MCF 10A (cell line): ENCODE measurements at regions of chr4 and their contacts with region 1.

Region 1: GRCh38 chr4:18593445-18594002 is 572.0 kb upstream of the LCORL start:
- DNase-seq: peak; percentile 79
- H3K4me3 Mint-ChIP-seq: peak overlapping the region; percentile 54
- H3K27ac Mint-ChIP-seq: no peak overlapping the region
- H3K4me1 Mint-ChIP-seq: peaks cover 6% of the 10 kb centered on the region
- H3K27me3 Mint-ChIP-seq: no peaks in the 10 kb centered on the region
- CTCF ChIP-seq: peak; percentile 67

Region 2: DNA sequence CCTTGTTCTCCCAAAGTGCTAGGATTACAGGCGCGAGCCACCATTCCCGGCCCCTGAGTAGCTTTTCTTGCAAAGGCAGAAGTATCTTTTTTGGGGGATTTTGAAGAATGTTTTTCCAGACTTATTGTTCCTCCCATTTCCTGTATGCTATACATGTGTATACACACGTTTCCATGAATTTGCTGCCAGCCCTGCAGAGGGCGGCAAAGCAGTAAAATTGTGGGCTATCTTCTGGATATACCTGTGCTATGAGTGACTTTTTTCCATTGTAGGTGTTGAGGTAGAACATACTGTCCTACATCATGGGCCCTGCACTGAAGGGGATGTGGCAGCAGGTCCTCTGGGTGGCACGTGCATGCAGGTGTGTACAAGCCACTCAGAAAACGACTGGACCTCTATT is 996.0 kb before region 1 on chr4:
- CTCF ChIA-PET with region 1: no interaction called
- POLR2A ChIA-PET with region 1: no interaction called
- intact Hi-C with region 1: loop called (anchors 1 kb)
- DNase-seq: peak; percentile 35
- H3K4me3 Mint-ChIP-seq: no peak overlapping the region
- H3K27ac Mint-ChIP-seq: no peak overlapping the region
- H3K4me1 Mint-ChIP-seq: no peaks in the 10 kb centered on the region
- H3K27me3 Mint-ChIP-seq: no peaks in the 10 kb centered on the region
- CTCF ChIP-seq: peak; percentile 32

Region 3: DNA sequence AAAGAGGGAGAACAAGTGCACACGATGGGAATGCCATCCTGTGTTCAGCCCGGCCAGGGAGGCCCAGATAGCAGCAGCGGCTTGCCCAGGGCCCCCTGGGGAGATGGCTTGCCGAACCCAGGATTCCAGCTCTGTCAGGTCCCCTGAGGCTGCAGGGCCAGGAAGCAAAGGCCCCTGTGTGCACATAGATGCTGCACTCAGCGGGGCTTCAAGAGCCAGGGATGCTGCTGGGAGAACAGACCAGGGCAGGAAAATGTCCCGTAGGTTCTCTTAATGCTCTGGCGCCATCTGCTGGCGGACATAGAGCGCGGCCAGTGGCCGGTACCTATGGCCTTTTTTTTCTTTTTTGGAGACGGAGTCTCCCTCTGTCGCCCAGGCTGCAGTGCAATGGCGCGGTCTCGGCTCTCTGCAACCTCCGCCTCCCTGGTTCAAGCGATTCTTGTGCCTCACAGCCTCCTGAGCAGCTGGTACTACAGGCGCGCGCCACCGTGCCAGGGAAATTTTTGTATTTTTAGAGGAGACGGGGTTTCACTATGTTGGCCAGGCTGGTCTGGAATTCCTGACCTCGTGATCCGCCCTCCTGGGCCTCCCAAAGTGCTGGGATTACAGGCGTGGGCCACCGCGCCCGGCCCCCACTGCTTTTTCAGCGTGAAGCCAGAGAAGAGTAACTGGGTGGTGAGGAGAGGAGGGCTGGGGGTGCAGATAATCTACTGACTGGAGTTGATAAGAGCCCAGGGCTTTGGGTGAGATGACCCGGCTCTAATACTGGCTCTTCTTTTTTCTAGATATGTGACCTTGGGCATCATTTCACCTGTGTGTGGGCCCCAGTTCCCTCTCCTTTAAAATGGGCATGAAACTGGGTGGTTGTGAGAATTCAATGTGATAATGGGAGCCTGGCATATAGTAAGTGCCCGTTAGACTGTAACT is 956.6 kb before region 1 on chr4:
- CTCF ChIA-PET with region 1: interaction called, 3 read pairs
- POLR2A ChIA-PET with region 1: no interaction called
- intact Hi-C with region 1: loop called (anchors 5 kb)
- DNase-seq: peak; percentile 80
- H3K4me3 Mint-ChIP-seq: no peak overlapping the region
- H3K27ac Mint-ChIP-seq: no peak overlapping the region
- H3K4me1 Mint-ChIP-seq: no peaks in the 10 kb centered on the region
- H3K27me3 Mint-ChIP-seq: no peaks in the 10 kb centered on the region
- CTCF ChIP-seq: peak; percentile 79

Region 4: GRCh38 chr4:17817020-17817419 is 776.5 kb before region 1 on chr4:
- CTCF ChIA-PET with region 1: interaction called, 18 read pairs
- POLR2A ChIA-PET with region 1: no interaction called
- intact Hi-C with region 1: loop called (anchors 1 kb)
- DNase-seq: peak; percentile 56
- H3K4me3 Mint-ChIP-seq: peak overlapping the region; percentile 24
- H3K27ac Mint-ChIP-seq: no peak overlapping the region
- H3K4me1 Mint-ChIP-seq: peaks cover 13% of the 10 kb centered on the region
- H3K27me3 Mint-ChIP-seq: no peaks in the 10 kb centered on the region
- CTCF ChIP-seq: peak; percentile 52

Region 5: DNA sequence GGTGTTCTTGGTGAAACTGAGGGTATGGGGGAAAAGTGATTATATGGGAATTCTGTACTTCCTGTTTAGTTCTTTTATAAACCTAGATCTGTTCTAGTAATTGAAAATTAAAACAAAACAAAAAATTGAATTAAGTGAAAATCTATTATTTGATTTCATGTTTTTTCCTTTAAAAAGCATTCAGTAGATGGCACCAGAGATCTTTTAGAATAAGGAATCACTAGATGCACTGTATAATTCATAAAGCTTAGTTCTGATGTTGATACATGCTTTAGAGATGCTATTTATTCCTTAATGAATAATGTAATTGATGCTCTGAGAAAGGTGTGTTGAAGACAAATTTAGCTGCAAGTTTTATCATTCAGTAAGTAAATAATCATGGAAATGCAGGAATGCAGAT is 659.2 kb before region 1 on chr4:
- CTCF ChIA-PET with region 1: no interaction called
- POLR2A ChIA-PET with region 1: no interaction called
- intact Hi-C with region 1: loop called (anchors 1 kb)
- DNase-seq: no peak
- H3K4me3 Mint-ChIP-seq: no peak overlapping the region
- H3K27ac Mint-ChIP-seq: no peak overlapping the region
- H3K4me1 Mint-ChIP-seq: peaks cover 15% of the 10 kb centered on the region
- H3K27me3 Mint-ChIP-seq: no peaks in the 10 kb centered on the region
- CTCF ChIP-seq: no peak

Region 6: GRCh38 chr4:18582841-18583240 is 10.7 kb before region 1 on chr4:
- CTCF ChIA-PET with region 1: interaction called, 11 read pairs
- POLR2A ChIA-PET with region 1: no interaction called
- intact Hi-C with region 1: no loop called
- DNase-seq: no peak
- H3K4me3 Mint-ChIP-seq: no peak overlapping the region
- H3K27ac Mint-ChIP-seq: no peak overlapping the region
- H3K4me1 Mint-ChIP-seq: peaks cover 11% of the 10 kb centered on the region
- H3K27me3 Mint-ChIP-seq: no peaks in the 10 kb centered on the region
- CTCF ChIP-seq: no peak